Heart right ventricle (tissue), 16 donors: ENCODE measurements at regions of chr2 and their contacts with region 1.

Region 1: DNA sequence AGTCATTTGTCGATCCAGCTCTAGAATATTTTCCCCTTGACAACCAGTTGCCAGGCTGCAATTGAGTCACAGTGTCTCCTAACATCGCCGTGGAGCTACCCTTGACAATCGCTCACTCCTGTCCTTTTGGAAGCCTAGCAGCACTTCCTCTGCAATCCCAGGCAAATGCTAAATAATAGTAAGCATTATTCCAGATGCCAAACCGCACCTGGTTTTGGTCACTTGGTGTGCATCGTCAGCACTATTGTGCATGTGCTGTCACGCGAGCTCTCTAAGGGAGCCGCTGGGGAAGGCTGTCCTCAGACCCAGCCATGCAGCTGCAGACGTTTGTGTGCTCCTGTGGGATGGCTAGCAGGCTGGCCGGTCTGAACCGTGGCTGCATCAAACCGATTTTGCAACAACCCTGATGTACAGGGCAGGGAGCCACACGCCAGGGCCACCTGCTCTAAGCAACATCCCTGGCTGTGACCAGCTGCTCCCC is 549.5 kb upstream of the ID2 start:
- DNase-seq: peak; percentile 24 to 45
- ATAC-seq: peak; percentile 53 to 83 (median 65)
- H3K4me3 ChIP-seq: no peak overlapping the region
- H3K27ac ChIP-seq: peak overlapping the region in 7 of 10 donors; percentile 15 to 74 (median 48)
- H3K4me1 ChIP-seq: peaks cover 4 to 44% (median 24%) of the 10 kb centered on the region in 9 donors
- H3K27me3 ChIP-seq: no peaks in the 10 kb centered on the region
- CTCF ChIP-seq: no peak

Region 2: DNA sequence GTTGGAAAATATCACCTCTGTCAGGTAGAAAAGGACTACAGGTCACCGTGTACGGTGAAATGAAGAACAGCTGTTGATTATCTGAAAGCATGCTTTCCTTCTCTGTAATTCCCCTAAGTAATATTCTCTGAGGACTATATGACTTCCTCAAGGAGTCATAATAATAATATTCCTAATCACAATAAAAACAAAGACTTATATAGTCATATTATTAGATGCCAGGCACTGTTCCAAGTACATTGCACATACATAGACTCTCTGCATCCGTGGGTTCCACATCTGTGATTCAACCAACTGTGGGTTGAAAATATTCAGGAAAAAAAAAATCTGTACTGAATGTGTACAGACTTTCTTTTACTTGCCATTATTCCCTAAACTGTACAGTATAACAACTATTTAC is 37.1 kb after region 1 on chr2:
- intact Hi-C with region 1: no loop called
- DNase-seq: no peak
- ATAC-seq: no peak
- H3K4me3 ChIP-seq: no peak overlapping the region
- H3K27ac ChIP-seq: no peak overlapping the region
- H3K4me1 ChIP-seq: peaks cover 0 to 35% (median 6%) of the 10 kb centered on the region in 9 donors
- H3K27me3 ChIP-seq: no peaks in the 10 kb centered on the region
- CTCF ChIP-seq: no peak

Region 3: DNA sequence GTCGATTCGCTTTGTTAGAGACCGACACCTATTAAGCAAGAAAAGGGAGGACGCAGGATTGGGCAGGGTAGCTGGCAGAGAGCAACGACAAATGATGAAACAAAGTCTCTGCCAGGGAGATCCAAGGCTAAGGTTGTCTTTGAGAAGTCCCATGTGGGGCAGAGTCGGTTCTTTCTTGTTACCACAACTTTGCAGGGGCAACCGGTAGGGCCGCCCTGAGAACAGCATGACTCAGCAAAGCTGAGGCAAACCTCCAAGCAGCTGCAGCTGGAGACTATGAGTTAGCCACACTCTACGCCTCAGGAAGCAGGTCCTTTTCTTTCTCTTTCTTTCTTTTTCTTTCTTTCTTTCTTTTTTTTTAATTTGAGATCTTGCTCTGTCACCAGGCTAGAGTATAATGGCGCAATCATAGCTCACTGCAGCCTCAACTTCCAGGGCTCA is 97.2 kb after region 1 on chr2:
- intact Hi-C with region 1: loop called in 2 of 10 experiments (anchors 10 kb)
- DNase-seq: peak; percentile 39 to 51
- ATAC-seq: peak; percentile 45 to 86 (median 64)
- H3K4me3 ChIP-seq: no peak overlapping the region
- H3K27ac ChIP-seq: peak overlapping the region in 2 of 10 donors; percentile 2 to 18
- H3K4me1 ChIP-seq: peaks cover 0 to 30% (median 23%) of the 10 kb centered on the region in 9 donors
- H3K27me3 ChIP-seq: no peaks in the 10 kb centered on the region
- CTCF ChIP-seq: no peak

Region 4: GRCh38 chr2:8234757-8235374 is 102.5 kb after region 1 on chr2:
- intact Hi-C with region 1: loop called in 1 of 10 experiments (anchors 10 kb)
- DNase-seq: no peak
- ATAC-seq: peak in 5 of 8 donors; percentile 23 to 71 (median 33)
- H3K4me3 ChIP-seq: no peak overlapping the region
- H3K27ac ChIP-seq: peak overlapping the region in 2 of 10 donors; percentile 11 to 50
- H3K4me1 ChIP-seq: peaks cover 0 to 39% (median 14%) of the 10 kb centered on the region in 9 donors
- H3K27me3 ChIP-seq: no peaks in the 10 kb centered on the region
- CTCF ChIP-seq: no peak

Region 5: GRCh38 chr2:8259106-8259840 is 126.9 kb after region 1 on chr2:
- intact Hi-C with region 1: no loop called
- DNase-seq: no peak
- ATAC-seq: no peak
- H3K4me3 ChIP-seq: no peak overlapping the region
- H3K27ac ChIP-seq: no peak overlapping the region
- H3K4me1 ChIP-seq: peaks cover 0 to 5% (median 0%) of the 10 kb centered on the region in 9 donors
- H3K27me3 ChIP-seq: no peaks in the 10 kb centered on the region
- CTCF ChIP-seq: no peak